Mucosa of descending colon (tissue), 3 donors: ENCODE measurements at regions of chr2 and their contacts with region 1.

Region 1: GRCh38 chr2:42386684-42387083 is 25.7 kb upstream of the COX7A2L start:
- DNase-seq: no peak
- ATAC-seq: peak; percentile 32
- H3K4me3 ChIP-seq: no peak overlapping the region
- H3K4me1 ChIP-seq: no peaks in the 10 kb centered on the region
- CTCF ChIP-seq: no peak

Region 2: GRCh38 chr2:42486145-42486906 is 99.6 kb after region 1 on chr2:
- intact Hi-C with region 1: loop called in 1 of 2 experiments (anchors 10 kb)
- DNase-seq: no peak
- ATAC-seq: peak; percentile 47
- H3K4me3 ChIP-seq: no peak overlapping the region
- H3K4me1 ChIP-seq: no peaks in the 10 kb centered on the region
- CTCF ChIP-seq: no peak